Posterior vena cava (tissue), 2 donors: ENCODE measurements at regions of chrX and their contacts with region 1.

Region 1: DNA sequence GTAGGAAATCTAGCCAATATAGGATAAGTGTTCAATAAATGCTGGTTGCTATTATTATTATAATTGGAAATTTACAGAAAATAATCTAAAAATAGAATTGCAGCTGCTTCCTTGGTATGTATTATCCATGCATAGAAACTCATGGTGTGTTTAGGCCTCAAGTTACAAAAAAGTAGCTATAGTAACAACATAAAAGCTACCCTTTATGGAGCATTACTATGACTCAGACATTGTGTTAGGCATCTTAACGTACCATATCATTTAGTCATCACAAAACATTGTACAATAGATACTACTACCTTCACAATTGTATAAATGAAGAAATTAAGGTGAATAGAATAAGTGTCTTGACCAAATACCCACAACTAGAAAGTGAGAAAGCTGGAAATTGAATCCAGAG is 126.9 kb upstream of the NRK start:
- DNase-seq: no peak

Region 2: GRCh38 chrX:105715759-105716532 is 20.5 kb after region 1 on chrX:
- intact Hi-C with region 1: loop called in 1 of 2 experiments (anchors 1 kb)
- DNase-seq: no peak